CD8-positive, alpha-beta memory T cell (primary cell): ENCODE measurements at regions of chr3 and their contacts with region 1.

Region 1: DNA sequence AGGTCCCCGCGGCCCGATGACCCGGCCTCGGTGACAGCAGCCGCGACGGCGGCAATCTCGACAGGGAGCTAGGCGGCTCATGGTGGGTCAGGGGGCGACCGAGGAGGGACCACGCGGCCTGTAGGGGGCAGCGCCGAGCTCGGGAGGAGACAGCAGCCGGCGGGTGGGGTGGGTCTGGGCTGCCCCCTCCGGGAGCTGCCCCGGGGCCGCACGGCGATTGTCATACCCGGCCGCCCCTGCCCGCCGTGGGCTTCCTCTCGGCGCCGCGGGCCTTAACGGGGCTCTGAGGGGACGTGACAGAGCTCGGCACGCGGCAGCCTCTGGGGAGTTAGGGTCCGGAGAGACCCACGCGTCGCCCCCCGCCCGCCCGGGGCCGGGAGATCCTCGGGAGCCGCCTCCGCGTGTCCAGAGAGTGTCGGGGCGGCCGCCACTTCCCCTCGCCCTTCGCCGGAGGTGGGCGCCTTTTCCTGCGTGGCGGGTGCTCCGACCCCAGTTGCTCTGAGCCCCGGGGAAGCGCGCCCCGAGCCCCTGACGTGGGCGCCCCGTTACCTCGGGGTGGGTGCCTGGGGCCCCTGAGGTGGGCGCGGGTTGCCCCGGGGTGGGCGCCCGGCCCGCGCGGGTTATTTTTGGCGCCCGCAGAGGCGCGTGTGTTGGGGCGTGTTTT is 539 bp upstream of the PLCL2 start:
- DNase-seq: peak; percentile 54 to 81 (median 60)
- H3K4me3 ChIP-seq: peak overlapping the region; percentile 21
- H3K4me3 Mint-ChIP-seq: peak overlapping the region; percentile 93 to 100 (median 99)
- H3K27ac ChIP-seq: peak overlapping the region; percentile 25
- H3K27ac Mint-ChIP-seq: peak overlapping the region; percentile 88 to 99 (median 94)
- H3K4me1 ChIP-seq: peaks cover 19% of the 10 kb centered on the region
- H3K4me1 Mint-ChIP-seq: peaks cover 30 to 41% (median 38%) of the 10 kb centered on the region in 3 donors
- H3K27me3 ChIP-seq: no peaks in the 10 kb centered on the region
- H3K27me3 Mint-ChIP-seq: no peaks in the 10 kb centered on the region

Region 2: GRCh38 chr3:16828815-16829214 is 55.4 kb before region 1 on chr3:
- CTCF ChIA-PET with region 1: interaction called, 12 read pairs
- POLR2A ChIA-PET with region 1: interaction called, 3 read pairs
- DNase-seq: peak; percentile 30 to 77 (median 34)
- H3K4me3 ChIP-seq: no peak overlapping the region
- H3K4me3 Mint-ChIP-seq: no peak overlapping the region
- H3K27ac ChIP-seq: no peak overlapping the region
- H3K27ac Mint-ChIP-seq: peak overlapping the region in 1 of 8 donors; percentile 36
- H3K4me1 ChIP-seq: peaks cover 16% of the 10 kb centered on the region
- H3K4me1 Mint-ChIP-seq: peaks cover 16 to 33% (median 25%) of the 10 kb centered on the region in 3 donors
- H3K27me3 ChIP-seq: no peaks in the 10 kb centered on the region
- H3K27me3 Mint-ChIP-seq: no peaks in the 10 kb centered on the region

Region 3: GRCh38 chr3:16842272-16843270 is 41.6 kb before region 1 on chr3:
- CTCF ChIA-PET with region 1: interaction called, 52 read pairs
- POLR2A ChIA-PET with region 1: interaction called, 38 read pairs
- DNase-seq: peak; percentile 51 to 86 (median 78)
- H3K4me3 ChIP-seq: peak overlapping the region; percentile 67
- H3K4me3 Mint-ChIP-seq: peak overlapping the region; percentile 83 to 91 (median 84)
- H3K27ac ChIP-seq: peak overlapping the region; percentile 85
- H3K27ac Mint-ChIP-seq: peak overlapping the region; percentile 94 to 100 (median 98)
- H3K4me1 ChIP-seq: peaks cover 70% of the 10 kb centered on the region
- H3K4me1 Mint-ChIP-seq: peaks cover 80 to 99% (median 94%) of the 10 kb centered on the region in 3 donors
- H3K27me3 ChIP-seq: no peaks in the 10 kb centered on the region
- H3K27me3 Mint-ChIP-seq: no peaks in the 10 kb centered on the region

Region 4: GRCh38 chr3:16866571-16866970 is 17.6 kb before region 1 on chr3:
- CTCF ChIA-PET with region 1: interaction called, 11 read pairs
- POLR2A ChIA-PET with region 1: no interaction called
- DNase-seq: peak in 2 of 5 donors; percentile 25 to 48
- H3K4me3 ChIP-seq: no peak overlapping the region
- H3K4me3 Mint-ChIP-seq: peak overlapping the region in 1 of 7 donors; percentile 42
- H3K27ac ChIP-seq: no peak overlapping the region
- H3K27ac Mint-ChIP-seq: peak overlapping the region in 1 of 8 donors; percentile 37
- H3K4me1 ChIP-seq: peaks cover 10% of the 10 kb centered on the region
- H3K4me1 Mint-ChIP-seq: peaks cover 12 to 14% (median 13%) of the 10 kb centered on the region in 3 donors
- H3K27me3 ChIP-seq: no peaks in the 10 kb centered on the region
- H3K27me3 Mint-ChIP-seq: peaks cover 2 to 7% of the 10 kb centered on the region in 2 donors

Region 5: GRCh38 chr3:16898595-16899395 is 14.6 kb after region 1 on chr3:
- CTCF ChIA-PET with region 1: interaction called, 12 read pairs
- POLR2A ChIA-PET with region 1: interaction called, 9 read pairs
- DNase-seq: no peak
- H3K4me3 ChIP-seq: no peak overlapping the region
- H3K4me3 Mint-ChIP-seq: peak overlapping the region in 6 of 7 donors; percentile 15 to 81 (median 61)
- H3K27ac ChIP-seq: no peak overlapping the region
- H3K27ac Mint-ChIP-seq: peak overlapping the region; percentile 55 to 94 (median 80)
- H3K4me1 ChIP-seq: peaks cover 91% of the 10 kb centered on the region
- H3K4me1 Mint-ChIP-seq: peaks cover 90 to 94% (median 93%) of the 10 kb centered on the region in 3 donors
- H3K27me3 ChIP-seq: no peaks in the 10 kb centered on the region
- H3K27me3 Mint-ChIP-seq: no peaks in the 10 kb centered on the region